Activated naive CD4-positive, alpha-beta T cell treated with anti-CD3 and anti-CD28 coated beads for 36 hours (primary cell): ENCODE measurements at regions of chr5 and their contacts with region 1.

Region 1: DNA sequence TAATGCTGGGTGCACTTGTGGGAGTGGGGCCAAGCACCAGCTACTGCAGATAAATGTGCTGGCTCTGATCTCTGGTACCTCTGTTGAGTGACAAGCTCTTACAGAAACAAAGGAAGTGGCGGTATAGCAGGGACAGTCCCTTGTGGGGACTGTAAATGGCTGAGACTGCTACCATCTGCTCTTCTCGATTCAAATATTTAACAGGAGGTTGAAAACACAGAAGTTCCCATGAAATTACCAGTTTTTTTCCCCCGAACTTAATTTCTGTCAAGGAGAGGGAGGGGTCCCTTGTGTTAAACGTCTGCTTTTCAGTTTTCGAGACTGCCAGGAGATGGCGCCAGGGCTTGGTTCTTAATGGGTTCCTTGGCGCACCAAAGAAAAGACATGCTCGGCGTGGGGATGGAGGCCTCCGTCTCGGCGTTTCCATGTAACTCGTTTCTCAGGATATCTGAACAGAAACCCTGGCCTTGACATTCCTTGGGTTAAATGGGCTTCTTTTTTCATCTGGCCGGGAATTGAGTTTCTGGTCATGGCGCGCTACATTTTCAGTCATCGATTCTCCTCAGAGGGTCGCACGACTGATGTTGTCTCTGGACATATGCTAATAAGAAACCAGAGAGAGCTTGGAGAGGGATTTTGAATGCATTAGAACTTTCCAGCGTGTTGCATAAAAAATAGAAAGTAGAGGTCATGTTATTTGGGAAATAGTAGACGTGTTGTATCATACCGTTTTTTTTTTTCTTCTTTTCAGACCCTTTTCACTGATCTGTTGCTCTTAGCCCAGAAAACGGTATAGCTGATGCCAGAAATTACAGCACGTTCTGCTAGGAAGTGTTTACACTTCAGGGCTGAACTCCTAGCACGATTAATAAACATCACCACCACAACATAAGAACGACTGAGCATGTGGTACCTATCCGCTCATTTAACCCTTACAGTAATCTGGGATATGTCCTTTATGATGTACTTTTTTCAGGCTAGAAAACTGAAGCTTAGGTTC is 64.0 kb downstream of the CARTPT start:
- DNase-seq: peak; percentile 90
- H3K4me3 Mint-ChIP-seq: peak overlapping the region; percentile 37
- H3K27ac Mint-ChIP-seq: peak overlapping the region; percentile 52
- H3K4me1 Mint-ChIP-seq: peaks cover 25% of the 10 kb centered on the region
- H3K27me3 Mint-ChIP-seq: peaks cover 9% of the 10 kb centered on the region

Region 2: GRCh38 chr5:72018146-72018803 is 235.2 kb after region 1 on chr5:
- CTCF ChIA-PET with region 1: interaction called, 6 read pairs
- intact Hi-C with region 1: loop called (anchors 1 kb)
- DNase-seq: peak; percentile 81
- H3K4me3 Mint-ChIP-seq: no peak overlapping the region
- H3K27ac Mint-ChIP-seq: no peak overlapping the region
- H3K4me1 Mint-ChIP-seq: no peaks in the 10 kb centered on the region
- H3K27me3 Mint-ChIP-seq: peaks cover 26% of the 10 kb centered on the region

Region 3: GRCh38 chr5:72226950-72227349 is 443.9 kb after region 1 on chr5:
- CTCF ChIA-PET with region 1: no interaction called
- intact Hi-C with region 1: no loop called
- DNase-seq: no peak
- H3K4me3 Mint-ChIP-seq: no peak overlapping the region
- H3K27ac Mint-ChIP-seq: no peak overlapping the region
- H3K4me1 Mint-ChIP-seq: peaks cover 10% of the 10 kb centered on the region
- H3K27me3 Mint-ChIP-seq: no peaks in the 10 kb centered on the region

Region 4: DNA sequence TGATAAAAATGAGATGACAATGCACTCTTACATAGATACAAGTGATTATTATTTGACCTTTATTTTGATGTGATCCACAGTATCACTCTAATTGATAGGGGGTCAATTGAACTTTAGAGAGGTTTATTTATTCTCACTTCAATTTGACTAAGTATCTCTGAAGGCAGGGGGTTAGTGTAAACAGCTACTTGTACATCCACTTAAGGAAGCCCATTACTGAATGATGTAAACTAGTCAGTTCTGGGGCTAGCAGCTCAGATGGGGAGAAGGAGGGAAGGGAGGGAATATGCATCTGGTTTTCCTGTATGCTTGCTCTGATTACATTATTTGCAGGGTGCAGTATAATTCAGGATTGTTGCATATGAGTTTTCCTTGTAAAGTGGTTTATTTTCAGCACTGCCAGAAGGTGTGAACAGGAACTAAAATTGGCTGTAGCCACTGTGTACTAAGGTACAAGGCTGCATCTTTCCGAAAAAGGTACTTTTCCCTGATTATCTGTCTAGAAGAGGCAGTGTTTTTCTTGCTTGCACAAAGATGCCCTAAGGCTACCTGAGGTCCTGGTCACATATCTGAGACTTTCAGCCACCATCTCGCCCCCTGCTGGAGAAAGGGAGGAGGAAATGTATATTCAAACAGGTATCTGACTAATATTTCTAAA is 485.8 kb after region 1 on chr5:
- CTCF ChIA-PET with region 1: no interaction called
- intact Hi-C with region 1: loop called (anchors 5 kb)
- DNase-seq: peak; percentile 58
- H3K4me3 Mint-ChIP-seq: no peak overlapping the region
- H3K27ac Mint-ChIP-seq: no peak overlapping the region
- H3K4me1 Mint-ChIP-seq: peaks cover 4% of the 10 kb centered on the region
- H3K27me3 Mint-ChIP-seq: no peaks in the 10 kb centered on the region

Region 5: GRCh38 chr5:72319976-72320752 is 537.1 kb after region 1 on chr5 and contains the starts of genes MRPS27 and PTCD2:
- CTCF ChIA-PET with region 1: no interaction called
- intact Hi-C with region 1: loop called (anchors 5 kb)
- DNase-seq: peak; percentile 97
- H3K4me3 Mint-ChIP-seq: peak within 1 kb of the TSS; percentile 80
- H3K27ac Mint-ChIP-seq: peak within 1 kb of the TSS; percentile 91
- H3K4me1 Mint-ChIP-seq: peaks cover 45% of the 10 kb centered on the region
- H3K27me3 Mint-ChIP-seq: no peaks in the 10 kb centered on the region
- total RNA-seq, gene MRPS27: 86.0 to 95.8 TPM
- total RNA-seq, gene PTCD2: 10.1 to 11.6 TPM